ENCODE measurements at regions of chr11 and their contacts with region 1.

Region 1: DNA sequence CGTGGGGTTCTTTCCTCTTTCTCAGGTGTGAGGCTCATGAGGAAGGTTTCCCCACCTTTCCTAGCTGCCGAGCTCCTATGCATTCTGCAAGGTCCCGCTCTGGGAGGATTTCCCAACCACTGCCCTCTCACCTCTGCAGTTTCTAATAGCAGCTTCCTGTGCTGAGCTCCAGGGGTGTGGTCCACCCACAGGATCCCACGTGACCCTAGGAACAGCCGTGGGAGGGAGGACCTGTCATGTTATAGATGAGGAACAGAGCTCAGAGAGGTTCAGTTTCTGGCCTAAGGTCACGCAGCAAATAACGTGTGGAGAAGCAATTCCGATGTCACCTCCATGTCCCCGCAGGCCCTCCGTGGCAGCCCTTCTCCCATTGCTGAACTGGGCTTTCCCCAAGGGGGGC is 38.5 kb downstream of the FLRT1 start:
- DNase-seq: no peak
- H3K4me3 ChIP-seq: no peak overlapping the region
- H3K27ac ChIP-seq: no peak overlapping the region
- H3K4me1 ChIP-seq: no peaks in the 10 kb centered on the region
- H3K27me3 ChIP-seq: no peaks in the 10 kb centered on the region

Region 2: DNA sequence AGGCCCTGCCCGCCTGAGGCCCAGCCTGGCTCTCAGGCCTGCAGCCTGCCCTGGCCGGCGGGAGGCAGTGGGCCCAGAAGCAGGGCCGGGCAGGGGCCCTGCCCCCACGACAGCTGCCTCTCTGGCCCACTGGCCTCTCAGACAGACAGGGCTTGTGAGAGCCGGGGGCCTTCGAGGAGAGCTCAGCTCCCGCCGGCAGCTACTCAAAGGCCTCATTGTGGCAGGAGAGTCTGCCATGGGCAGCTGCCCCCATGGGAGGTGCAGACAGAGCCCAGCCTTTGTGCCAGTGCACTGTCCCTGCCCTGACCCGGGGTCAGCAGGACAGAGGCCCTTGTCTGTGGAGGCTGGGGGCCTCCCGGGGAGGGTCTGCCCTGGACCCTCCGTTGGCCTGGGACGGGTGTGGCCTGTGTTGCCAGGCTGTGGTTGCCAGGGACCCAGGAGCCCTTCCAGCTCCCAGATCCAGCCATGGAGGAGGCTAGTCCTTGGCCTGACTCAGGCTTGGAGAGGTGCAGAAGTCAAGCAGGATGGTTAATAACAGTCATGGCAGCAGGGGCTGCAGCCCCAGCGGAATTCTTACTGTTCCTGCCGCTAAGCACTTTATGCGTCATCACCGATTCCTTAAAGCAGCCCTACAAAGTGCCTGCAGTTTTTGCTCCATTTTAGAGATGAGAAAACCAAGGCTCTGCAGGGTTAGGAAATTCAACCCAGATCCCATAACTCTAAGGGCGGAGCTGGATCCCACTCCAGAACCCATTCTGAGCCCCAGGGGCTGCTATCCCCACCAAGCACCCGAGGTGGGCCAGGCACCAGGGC is 26.0 kb before region 1 on chr11:
- CTCF ChIA-PET with region 1: no interaction called
- POLR2A ChIA-PET with region 1: no interaction called
- DNase-seq: no peak
- H3K4me3 ChIP-seq: no peak overlapping the region
- H3K27ac ChIP-seq: no peak overlapping the region
- H3K4me1 ChIP-seq: peaks cover 0 to 10% (median under 1%) of the 10 kb centered on the region in 4 experiments
- H3K27me3 ChIP-seq: no peaks in the 10 kb centered on the region

Region 3: DNA sequence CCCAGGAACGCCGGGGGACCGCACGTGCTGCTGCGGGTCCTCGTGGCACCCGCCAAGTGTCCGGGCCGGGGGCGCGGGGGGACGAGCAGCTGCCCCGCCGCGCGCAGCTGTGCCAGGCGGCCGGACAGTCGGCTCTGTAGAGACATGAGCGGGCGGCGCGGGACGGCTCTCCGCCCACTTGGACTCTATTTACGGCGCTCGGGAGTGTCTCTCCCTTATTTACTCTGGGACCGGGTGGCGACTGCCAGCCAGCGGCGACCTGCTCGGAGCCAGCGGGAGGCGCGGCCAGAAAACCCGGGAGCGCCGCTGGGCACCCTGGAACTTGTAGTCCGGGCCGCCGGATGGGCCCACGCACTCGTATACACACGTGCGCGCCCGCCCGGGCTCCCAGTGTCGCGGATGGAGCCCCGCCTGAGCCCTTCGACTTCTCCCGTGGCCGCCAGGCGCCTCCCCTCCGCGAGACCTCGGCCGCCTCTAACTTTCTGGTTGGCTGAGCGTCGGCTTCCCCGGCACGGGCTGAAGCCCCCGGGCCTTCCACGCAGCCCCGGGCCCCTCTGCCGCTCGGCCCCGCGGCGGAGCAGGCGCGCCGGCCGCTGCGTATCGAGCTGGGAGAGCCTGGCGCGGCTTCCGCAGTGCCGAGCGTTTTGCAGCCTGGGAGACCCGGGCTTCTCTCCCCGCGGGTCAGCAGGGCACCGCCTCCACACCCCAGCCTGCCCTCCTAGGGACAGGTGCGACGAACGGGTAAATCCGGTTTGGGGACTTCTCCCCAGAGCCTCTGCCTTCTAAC is 91.8 kb after region 1 on chr11 and contains the start of gene MACROD1:
- CTCF ChIA-PET with region 1: no interaction called
- POLR2A ChIA-PET with region 1: interaction called, 11 read pairs
- DNase-seq: peak; percentile 61 to 79 (median 70)
- H3K4me3 ChIP-seq: peak within 1 kb of the TSS; percentile 47 to 81 (median 66)
- H3K27ac ChIP-seq: peak within 1 kb of the TSS in 1 of 2 experiments; percentile 54
- H3K4me1 ChIP-seq: peaks cover 0 to 21% (median 16%) of the 10 kb centered on the region in 4 experiments
- H3K27me3 ChIP-seq: no peaks in the 10 kb centered on the region